H1 (cell line): ENCODE measurements at regions of chr7 and their contacts with region 1.

Region 1: DNA sequence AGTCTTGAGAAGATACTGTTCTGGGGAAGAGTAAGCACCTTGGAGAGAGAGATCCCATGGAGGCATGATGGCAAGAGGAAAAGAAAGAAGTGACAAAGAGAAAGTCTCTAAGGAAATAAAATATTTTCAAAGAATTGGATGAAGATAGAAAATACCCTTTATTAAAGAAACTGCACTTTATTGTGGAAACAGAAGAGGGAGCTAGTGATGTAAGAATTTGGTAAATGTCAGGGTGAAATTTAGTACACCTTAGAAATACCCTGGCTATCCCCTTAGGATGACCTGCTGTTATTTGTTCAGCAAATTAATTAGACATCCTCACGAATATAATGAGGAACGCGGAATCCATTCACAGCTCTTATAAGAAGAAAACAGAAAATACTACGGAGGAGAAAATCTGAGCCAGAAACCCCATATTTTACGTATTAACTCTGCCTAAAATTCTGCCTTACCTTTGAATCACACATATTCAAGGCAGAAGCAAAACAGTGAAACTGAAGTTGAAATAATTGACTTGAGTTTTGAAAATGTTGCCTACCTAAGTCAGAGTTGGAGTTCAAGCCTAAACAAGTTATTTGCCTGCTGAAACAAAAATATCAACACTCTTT is 90.7 kb downstream of the TFPI2 start:
- DNase-seq: no peak
- H3K4me3 ChIP-seq: no peak overlapping the region
- H3K27ac ChIP-seq: no peak overlapping the region
- H3K4me1 ChIP-seq: no peaks in the 10 kb centered on the region
- H3K27me3 ChIP-seq: no peaks in the 10 kb centered on the region
- CTCF ChIP-seq: peak in 2 of 3 experiments; percentile 25 to 48; a peak in 2 of 4 replicates
- EP300 ChIP-seq: no peak
- POLR2A ChIP-seq: no peak
- RAD21 ChIP-seq: peak; percentile 57 to 66

Region 2: DNA sequence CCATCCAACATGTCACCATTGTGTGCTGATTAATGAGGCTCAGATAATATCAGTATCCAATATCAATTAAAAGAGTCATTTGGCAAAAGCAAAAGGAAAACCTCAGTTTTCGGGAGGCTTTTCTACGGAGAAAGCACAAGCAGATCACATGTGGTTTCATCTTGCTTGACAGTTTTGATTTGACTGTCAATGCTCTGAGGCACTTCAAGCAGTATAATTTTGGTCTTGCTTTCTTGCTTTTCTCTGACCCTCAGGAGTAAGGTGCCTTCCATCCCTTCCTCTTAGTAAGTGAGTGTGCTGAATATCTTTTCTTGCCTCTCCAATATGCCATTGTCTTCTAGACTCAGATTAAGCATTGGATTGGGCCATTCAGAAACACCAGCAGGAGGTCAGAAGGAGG is 109.8 kb before region 1 on chr7:
- CTCF ChIA-PET with region 1: no interaction called
- POLR2A ChIA-PET with region 1: no interaction called
- DNase-seq: no peak
- H3K4me3 ChIP-seq: no peak overlapping the region
- H3K27ac ChIP-seq: no peak overlapping the region
- H3K4me1 ChIP-seq: no peaks in the 10 kb centered on the region
- H3K27me3 ChIP-seq: no peaks in the 10 kb centered on the region
- CTCF ChIP-seq: no peak
- EP300 ChIP-seq: no peak
- POLR2A ChIP-seq: no peak
- RAD21 ChIP-seq: no peak

Region 3: DNA sequence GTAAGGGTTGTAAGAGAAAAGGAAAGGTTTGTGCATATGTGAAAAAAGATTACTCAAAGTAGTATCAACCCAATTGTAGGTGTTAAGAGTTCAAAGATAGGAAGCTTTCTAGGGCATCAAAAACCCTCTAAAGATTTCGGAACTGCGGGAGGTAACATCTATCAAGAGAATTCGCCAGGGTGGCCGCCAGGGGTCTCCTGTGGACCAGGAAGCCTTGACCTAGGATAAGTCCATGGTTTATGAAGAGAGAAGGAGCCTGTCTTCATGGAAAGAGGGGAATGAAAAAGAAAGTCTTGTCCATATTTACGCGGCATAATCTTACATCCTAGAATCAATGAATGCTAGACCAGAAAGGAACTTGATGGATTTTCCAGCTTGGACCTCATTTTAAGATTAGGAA is 84.6 kb before region 1 on chr7:
- CTCF ChIA-PET with region 1: interaction called, 11 read pairs
- POLR2A ChIA-PET with region 1: no interaction called
- DNase-seq: peak; percentile 33 to 74
- H3K4me3 ChIP-seq: no peak overlapping the region
- H3K27ac ChIP-seq: no peak overlapping the region
- H3K4me1 ChIP-seq: no peaks in the 10 kb centered on the region
- H3K27me3 ChIP-seq: peaks cover 0 to 1% (median 0%) of the 10 kb centered on the region in 4 experiments; a peak in 1 of 7 replicates
- CTCF ChIP-seq: peak; percentile 64 to 71 (median 65)
- EP300 ChIP-seq: no peak
- POLR2A ChIP-seq: no peak
- RAD21 ChIP-seq: peak; percentile 78 to 86

Region 4: DNA sequence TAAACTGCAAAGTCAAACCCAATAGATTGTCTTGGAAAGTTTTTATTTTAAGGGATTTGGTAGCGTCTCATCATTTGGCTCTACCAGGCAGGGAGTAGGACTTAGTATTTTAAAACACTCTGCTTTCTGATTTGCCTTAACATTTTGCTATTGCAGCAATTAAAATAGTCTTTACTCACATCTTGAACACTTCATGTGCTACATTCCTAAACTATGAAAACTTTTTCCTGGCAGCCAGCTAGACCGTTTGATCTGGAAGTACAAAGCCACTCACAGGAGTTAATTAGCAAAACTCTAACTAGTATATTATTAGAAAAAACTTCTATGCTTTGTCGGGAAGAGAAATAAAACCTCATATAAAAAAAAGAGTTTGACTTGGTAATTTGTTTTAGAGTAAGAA is 20.7 kb before region 1 on chr7:
- CTCF ChIA-PET with region 1: interaction called, 47 read pairs
- POLR2A ChIA-PET with region 1: no interaction called
- DNase-seq: no peak
- H3K4me3 ChIP-seq: no peak overlapping the region
- H3K27ac ChIP-seq: no peak overlapping the region
- H3K4me1 ChIP-seq: no peaks in the 10 kb centered on the region
- H3K27me3 ChIP-seq: no peaks in the 10 kb centered on the region
- CTCF ChIP-seq: no peak
- EP300 ChIP-seq: no peak
- POLR2A ChIP-seq: no peak
- RAD21 ChIP-seq: no peak

Region 5: GRCh38 chr7:93821463-93821862 is 21.6 kb after region 1 on chr7:
- CTCF ChIA-PET with region 1: interaction called, 11 read pairs
- POLR2A ChIA-PET with region 1: no interaction called
- DNase-seq: no peak
- H3K4me3 ChIP-seq: no peak overlapping the region
- H3K27ac ChIP-seq: no peak overlapping the region
- H3K4me1 ChIP-seq: peaks cover 0 to 7% (median 0%) of the 10 kb centered on the region in 4 experiments; a peak in 1 of 7 replicates
- H3K27me3 ChIP-seq: no peaks in the 10 kb centered on the region
- CTCF ChIP-seq: no peak
- EP300 ChIP-seq: no peak
- POLR2A ChIP-seq: no peak
- RAD21 ChIP-seq: no peak

Region 6: GRCh38 chr7:93836116-93836515 is 36.3 kb after region 1 on chr7:
- CTCF ChIA-PET with region 1: no interaction called
- POLR2A ChIA-PET with region 1: no interaction called
- DNase-seq: no peak
- H3K4me3 ChIP-seq: peak overlapping the region in 1 of 4 experiments; percentile 16; a peak in 1 of 8 replicates
- H3K27ac ChIP-seq: no peak overlapping the region
- H3K4me1 ChIP-seq: peaks cover 0 to 2% (median 0%) of the 10 kb centered on the region in 4 experiments; a peak in 1 of 7 replicates
- H3K27me3 ChIP-seq: no peaks in the 10 kb centered on the region
- CTCF ChIP-seq: no peak
- EP300 ChIP-seq: no peak
- POLR2A ChIP-seq: no peak
- RAD21 ChIP-seq: no peak

Region 7: GRCh38 chr7:93851536-93851935 is 51.7 kb after region 1 on chr7:
- CTCF ChIA-PET with region 1: no interaction called
- POLR2A ChIA-PET with region 1: no interaction called
- DNase-seq: no peak
- H3K4me3 ChIP-seq: no peak overlapping the region
- H3K27ac ChIP-seq: no peak overlapping the region
- H3K4me1 ChIP-seq: no peaks in the 10 kb centered on the region
- H3K27me3 ChIP-seq: no peaks in the 10 kb centered on the region
- CTCF ChIP-seq: no peak
- EP300 ChIP-seq: no peak
- POLR2A ChIP-seq: no peak
- RAD21 ChIP-seq: no peak